ENCODE measurements at regions of chr3 and their contacts with region 1.

Region 1: GRCh38 chr3:45210308-45211041 is 15.6 kb downstream of the TMEM158 start:
- DNase-seq: peak; percentile 46 to 89
- H3K4me3 ChIP-seq: no peak overlapping the region
- H3K27ac ChIP-seq: no peak overlapping the region
- H3K4me1 ChIP-seq: peaks cover 0 to 3% (median 0%) of the 10 kb centered on the region in 4 experiments; a peak in 1 of 7 replicates
- H3K27me3 ChIP-seq: no peaks in the 10 kb centered on the region
- CTCF ChIP-seq: peak; percentile 80 to 90 (median 81)
- EP300 ChIP-seq: no peak
- POLR2A ChIP-seq: no peak
- RAD21 ChIP-seq: peak; percentile 80 to 83

Region 2: GRCh38 chr3:45043728-45044299 is 166.7 kb before region 1 on chr3:
- CTCF ChIA-PET with region 1: interaction called, 206 read pairs
- POLR2A ChIA-PET with region 1: interaction called, 3 read pairs
- DNase-seq: no peak
- H3K4me3 ChIP-seq: no peak overlapping the region
- H3K27ac ChIP-seq: no peak overlapping the region
- H3K4me1 ChIP-seq: no peaks in the 10 kb centered on the region
- H3K27me3 ChIP-seq: no peaks in the 10 kb centered on the region; a peak in 3 of 7 replicates
- CTCF ChIP-seq: no peak
- EP300 ChIP-seq: no peak
- POLR2A ChIP-seq: no peak
- RAD21 ChIP-seq: no peak

Region 3: DNA sequence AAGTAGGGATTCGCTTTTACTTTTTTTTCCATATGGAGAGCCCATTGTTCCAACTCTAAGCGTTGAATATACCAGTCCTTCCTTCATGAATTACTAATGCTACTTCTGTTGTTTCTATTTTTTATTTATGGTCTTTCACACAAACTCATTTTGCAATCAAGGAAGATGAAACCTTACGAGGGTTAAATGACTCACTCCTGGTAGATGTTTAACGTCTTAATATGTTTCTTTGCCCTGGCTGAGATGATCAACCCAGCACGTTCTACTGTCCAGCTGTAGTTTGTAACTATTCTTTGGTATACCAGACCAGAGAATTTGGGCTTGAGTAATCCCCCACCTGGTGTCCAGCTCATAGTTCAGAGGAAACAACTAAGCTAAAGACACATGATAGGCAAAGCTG is 87.4 kb before region 1 on chr3:
- CTCF ChIA-PET with region 1: interaction called, 12 read pairs
- POLR2A ChIA-PET with region 1: no interaction called
- DNase-seq: no peak
- H3K4me3 ChIP-seq: no peak overlapping the region
- H3K27ac ChIP-seq: no peak overlapping the region
- H3K4me1 ChIP-seq: no peaks in the 10 kb centered on the region
- H3K27me3 ChIP-seq: no peaks in the 10 kb centered on the region
- CTCF ChIP-seq: no peak
- EP300 ChIP-seq: no peak
- POLR2A ChIP-seq: no peak
- RAD21 ChIP-seq: no peak

Region 4: DNA sequence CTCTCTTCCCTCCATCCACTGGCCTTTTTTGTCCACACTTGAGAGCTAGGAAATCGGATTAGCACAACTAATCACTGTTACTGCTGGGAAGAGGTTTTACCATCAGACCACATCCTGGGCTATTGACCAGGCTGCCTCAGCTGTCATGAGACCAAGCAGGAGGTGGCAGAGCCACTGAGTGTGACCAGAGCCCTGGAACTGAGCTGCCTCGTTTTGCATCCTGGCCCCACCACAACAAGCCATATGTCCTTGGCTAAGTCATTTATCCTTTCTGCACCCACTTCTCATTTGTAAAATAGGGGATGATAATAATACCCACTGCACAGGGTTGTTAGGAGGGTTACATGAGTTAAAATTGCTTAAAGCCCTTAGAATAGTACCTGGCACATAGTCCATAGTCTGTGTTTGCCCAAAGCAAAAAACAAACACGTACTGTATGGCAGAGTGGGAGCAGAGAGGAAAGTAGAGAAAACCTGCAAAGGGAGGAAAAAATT is 18.5 kb before region 1 on chr3:
- CTCF ChIA-PET with region 1: interaction called, 35 read pairs
- POLR2A ChIA-PET with region 1: no interaction called
- DNase-seq: no peak
- H3K4me3 ChIP-seq: no peak overlapping the region
- H3K27ac ChIP-seq: no peak overlapping the region
- H3K4me1 ChIP-seq: no peaks in the 10 kb centered on the region
- H3K27me3 ChIP-seq: no peaks in the 10 kb centered on the region; a peak in 1 of 7 replicates
- CTCF ChIP-seq: no peak
- EP300 ChIP-seq: no peak
- POLR2A ChIP-seq: no peak
- RAD21 ChIP-seq: no peak

Region 5: GRCh38 chr3:45224824-45225464 is 14.5 kb after region 1 on chr3:
- CTCF ChIA-PET with region 1: interaction called, 13 read pairs
- POLR2A ChIA-PET with region 1: interaction called, 4 read pairs
- DNase-seq: peak; percentile 31 to 81
- H3K4me3 ChIP-seq: peak overlapping the region; percentile 44 to 95 (median 76)
- H3K27ac ChIP-seq: no peak overlapping the region
- H3K4me1 ChIP-seq: peaks cover 1 to 15% (median 4%) of the 10 kb centered on the region in 4 experiments; a peak in 6 of 7 replicates
- H3K27me3 ChIP-seq: peaks cover 0 to 5% (median 0%) of the 10 kb centered on the region in 4 experiments; a peak in 2 of 7 replicates
- CTCF ChIP-seq: peak; percentile 77 to 90 (median 84)
- EP300 ChIP-seq: no peak
- POLR2A ChIP-seq: no peak
- RAD21 ChIP-seq: peak; percentile 89